PC-9 (cell line): ENCODE measurements at regions of chr12 and their contacts with region 1.

Region 1: DNA sequence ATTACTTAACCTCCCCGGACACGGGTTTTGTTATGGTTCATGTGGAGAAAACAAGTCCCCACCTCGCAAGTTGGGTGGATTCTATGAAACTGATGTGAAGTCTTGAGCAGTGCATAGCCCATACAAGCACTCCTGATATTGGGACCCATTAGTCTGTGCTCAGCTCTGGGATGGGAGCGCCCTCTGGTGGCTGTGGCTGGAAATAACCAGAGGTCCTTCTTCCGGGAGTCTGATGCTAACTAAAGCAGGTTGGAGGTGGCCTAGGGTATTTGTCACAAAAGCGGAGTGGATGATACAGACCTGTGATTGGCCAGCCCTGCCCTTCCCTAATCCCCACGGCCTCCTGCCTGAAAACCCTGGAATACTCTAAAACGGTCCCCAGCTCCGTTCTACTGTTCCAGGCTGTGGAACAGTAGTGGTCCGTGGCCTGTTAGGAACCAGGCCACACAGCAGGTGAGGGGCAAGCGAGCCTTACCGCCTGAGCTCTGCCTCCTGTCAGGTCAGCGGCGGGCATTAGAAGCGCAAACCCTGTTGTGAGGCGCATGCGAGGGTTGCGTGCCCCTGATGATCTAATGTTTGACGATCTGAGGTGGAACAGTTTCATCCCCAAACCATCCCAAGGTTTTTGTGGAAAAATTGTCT is 6.4 kb downstream of the SLC48A1 start:
- DNase-seq: peak; percentile 76 to 87
- H3K4me3 ChIP-seq: no peak overlapping the region
- H3K27ac ChIP-seq: no peak overlapping the region
- H3K4me1 ChIP-seq: peaks cover 62% of the 10 kb centered on the region
- H3K27me3 ChIP-seq: no peaks in the 10 kb centered on the region
- CTCF ChIP-seq: peak; percentile 96

Region 2: DNA sequence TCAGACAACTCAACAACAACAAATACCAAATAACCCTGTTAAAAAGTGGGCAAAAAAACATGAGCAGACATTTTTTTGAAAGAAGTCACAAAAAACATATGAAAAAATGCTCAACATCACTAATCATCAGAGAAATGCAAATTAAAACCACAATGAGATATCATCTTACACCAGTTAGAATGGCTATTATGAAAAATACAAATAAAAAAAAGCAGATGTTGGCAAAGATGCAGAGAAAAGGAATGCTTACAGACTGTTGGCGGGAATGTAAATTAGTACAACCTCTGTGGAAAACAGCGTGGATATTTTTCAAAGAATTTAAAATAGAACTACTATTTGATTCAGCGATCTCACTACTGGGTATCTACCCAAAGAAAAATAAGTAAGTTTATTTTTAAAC is 1067.7 kb before region 1 on chr12:
- CTCF ChIA-PET with region 1: no interaction called
- POLR2A ChIA-PET with region 1: interaction called, 11 read pairs
- intact Hi-C with region 1: no loop called
- DNase-seq: no peak
- H3K4me3 ChIP-seq: no peak overlapping the region
- H3K27ac ChIP-seq: no peak overlapping the region
- H3K4me1 ChIP-seq: no peaks in the 10 kb centered on the region
- H3K27me3 ChIP-seq: no peaks in the 10 kb centered on the region
- CTCF ChIP-seq: no peak

Region 3: DNA sequence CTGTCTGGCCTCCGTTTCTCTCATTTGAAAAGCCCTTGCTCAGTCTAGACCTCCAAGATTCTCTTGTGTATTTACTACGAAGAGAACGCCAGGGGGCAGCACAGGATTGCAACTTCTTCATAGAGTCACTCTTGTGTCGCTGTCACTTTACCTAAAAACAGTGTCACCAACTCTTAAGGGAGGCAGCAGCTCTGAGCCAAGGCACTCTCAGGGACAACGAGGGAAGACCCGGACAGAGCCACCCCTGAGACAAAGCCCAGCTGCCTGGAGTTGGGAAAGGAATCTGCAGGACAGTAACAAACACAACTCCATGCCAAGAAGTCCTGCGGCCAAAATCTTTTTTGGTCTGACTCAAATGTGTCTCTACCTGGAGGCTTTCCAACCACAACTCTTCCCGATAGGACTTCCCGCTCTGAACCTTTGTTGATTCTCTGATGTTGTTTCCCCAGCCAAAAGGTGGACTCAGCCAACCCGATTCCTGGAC is 64.0 kb before region 1 on chr12:
- CTCF ChIA-PET with region 1: no interaction called
- POLR2A ChIA-PET with region 1: interaction called, 24 read pairs
- intact Hi-C with region 1: loop called (anchors 1 kb)
- DNase-seq: peak; percentile 56 to 61
- H3K4me3 ChIP-seq: no peak overlapping the region
- H3K27ac ChIP-seq: no peak overlapping the region
- H3K4me1 ChIP-seq: no peaks in the 10 kb centered on the region
- H3K27me3 ChIP-seq: no peaks in the 10 kb centered on the region
- CTCF ChIP-seq: peak; percentile 91

Region 4: GRCh38 chr12:47758834-47759690 is 20.4 kb before region 1 on chr12 and contains the start of gene RAPGEF3:
- CTCF ChIA-PET with region 1: interaction called, 5 read pairs
- POLR2A ChIA-PET with region 1: interaction called, 3 read pairs
- intact Hi-C with region 1: loop called (anchors 1 kb)
- DNase-seq: peak; percentile 81 to 86
- H3K4me3 ChIP-seq: peak within 1 kb of the TSS; percentile 75
- H3K27ac ChIP-seq: peak within 1 kb of the TSS; percentile 66
- H3K4me1 ChIP-seq: peaks cover 68% of the 10 kb centered on the region
- H3K27me3 ChIP-seq: no peaks in the 10 kb centered on the region
- CTCF ChIP-seq: peak; percentile 59
- total RNA-seq, gene RAPGEF3: 4.1 and 5.7 TPM in 2 replicates

Region 5: GRCh38 chr12:47819896-47820630 is 40.6 kb after region 1 on chr12 and contains the start of gene HDAC7:
- CTCF ChIA-PET with region 1: no interaction called
- POLR2A ChIA-PET with region 1: interaction called, 3 read pairs
- intact Hi-C with region 1: loop called (anchors 1 kb)
- DNase-seq: peak; percentile 54 to 68
- H3K4me3 ChIP-seq: peak within 1 kb of the TSS; percentile 95
- H3K27ac ChIP-seq: peak within 1 kb of the TSS; percentile 80
- H3K4me1 ChIP-seq: peaks cover 76% of the 10 kb centered on the region
- H3K27me3 ChIP-seq: no peaks in the 10 kb centered on the region
- CTCF ChIP-seq: no peak
- total RNA-seq, gene HDAC7: 106 and 114 TPM in 2 replicates

Region 6: DNA sequence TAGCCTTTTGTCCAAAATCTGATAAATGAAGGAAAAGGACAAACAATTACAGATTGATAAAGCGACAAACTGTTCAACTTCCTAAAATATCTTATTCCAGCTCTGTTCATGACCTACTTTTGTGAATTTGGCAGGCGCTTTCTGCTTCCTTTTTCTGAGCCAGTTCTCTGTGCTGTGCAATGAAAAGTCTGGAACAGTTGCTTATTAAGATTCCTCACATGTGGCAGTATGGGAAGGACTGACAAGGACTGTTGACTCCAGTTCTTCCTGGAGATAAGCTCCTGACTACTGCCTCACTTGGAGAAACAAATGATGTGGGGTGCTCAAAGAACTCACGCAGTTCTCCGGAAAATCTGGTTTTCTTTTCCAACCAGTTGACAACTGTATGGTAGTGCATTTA is 634.6 kb after region 1 on chr12:
- CTCF ChIA-PET with region 1: no interaction called
- POLR2A ChIA-PET with region 1: no interaction called
- intact Hi-C with region 1: no loop called
- DNase-seq: no peak
- H3K4me3 ChIP-seq: no peak overlapping the region
- H3K27ac ChIP-seq: no peak overlapping the region
- H3K4me1 ChIP-seq: no peaks in the 10 kb centered on the region
- H3K27me3 ChIP-seq: peaks cover 36% of the 10 kb centered on the region
- CTCF ChIP-seq: no peak